ENCODE measurements at regions of chr19 and their contacts with region 1.

Region 1: GRCh38 chr19:54463531-54464043 is at the start of gene LENG9:
- DNase-seq: peak; percentile 100
- ATAC-seq: peak; percentile 73
- H3K4me3 Mint-ChIP-seq: peak within 1 kb of the TSS; percentile 82
- H3K27ac Mint-ChIP-seq: peak within 1 kb of the TSS; percentile 88
- H3K4me1 Mint-ChIP-seq: peaks cover 26% of the 10 kb centered on the region
- H3K27me3 Mint-ChIP-seq: peaks cover under 1% of the 10 kb centered on the region
- CTCF ChIP-seq: no peak
- total RNA-seq, gene LENG9: 4.3 to 5.5 TPM

Region 2: GRCh38 chr19:54448774-54449700 is 14.6 kb before region 1 on chr19 and contains the start of gene LENG8:
- CTCF ChIA-PET with region 1: interaction called, 3 read pairs
- POLR2A ChIA-PET with region 1: interaction called, 38 read pairs
- intact Hi-C with region 1: no loop called
- DNase-seq: peak; percentile 99
- ATAC-seq: peak; percentile 92
- H3K4me3 Mint-ChIP-seq: peak within 1 kb of the TSS; percentile 99
- H3K27ac Mint-ChIP-seq: peak within 1 kb of the TSS; percentile 99
- H3K4me1 Mint-ChIP-seq: peaks cover 33% of the 10 kb centered on the region
- H3K27me3 Mint-ChIP-seq: peaks cover 2% of the 10 kb centered on the region
- CTCF ChIP-seq: no peak
- total RNA-seq, gene LENG8: 165 to 170 TPM

Measured in activated CD8-positive, alpha-beta T cell treated with anti-CD3 and anti-CD28 coated beads for 36 hours (primary cell).